GM13977 (cell line): ENCODE measurements at regions of chr7 and their contacts with region 1.

Region 1: DNA sequence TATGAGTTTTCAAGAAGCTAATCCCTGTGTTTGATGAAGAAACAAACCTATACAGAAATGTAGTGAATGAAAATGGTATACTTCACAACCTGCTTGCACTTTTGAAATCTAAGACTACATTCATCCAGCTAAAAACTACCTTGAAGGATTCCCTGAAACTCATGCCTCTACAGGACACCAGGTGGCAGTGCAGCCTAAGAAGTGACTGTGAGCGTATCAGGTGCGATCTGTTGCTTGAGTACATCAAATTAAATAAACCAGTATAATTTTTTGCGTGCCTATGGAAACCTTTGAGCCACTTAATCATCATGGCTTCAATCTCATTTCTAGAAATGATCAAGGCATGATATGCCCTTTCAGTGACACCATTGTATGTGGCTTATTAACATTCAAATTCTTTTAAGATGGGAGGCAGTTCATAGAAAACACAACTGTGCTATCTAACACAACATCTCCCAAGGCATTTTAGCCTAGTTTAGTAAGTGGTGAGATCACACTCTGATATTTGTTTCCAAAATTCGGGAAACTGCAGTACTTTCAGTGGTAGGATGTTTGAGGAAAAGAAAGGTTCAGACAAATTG is 57.4 kb downstream of the PPP1R17 start:
- DNase-seq: peak; percentile 39
- CTCF ChIP-seq: peak; percentile 80

Region 2: GRCh38 chr7:31443457-31443856 is 300.9 kb before region 1 on chr7:
- in situ Hi-C with region 1: loop called (anchors 25 kb)
- DNase-seq: peak; percentile 31
- CTCF ChIP-seq: peak; percentile 77

Region 3: GRCh38 chr7:31648288-31648687 is 96.1 kb before region 1 on chr7:
- in situ Hi-C with region 1: no loop called
- DNase-seq: no peak
- CTCF ChIP-seq: peak; percentile 12

Region 4: GRCh38 chr7:32347244-32347828 is 603.0 kb after region 1 on chr7:
- in situ Hi-C with region 1: loop called (anchors 25 kb)
- DNase-seq: peak; percentile 36
- CTCF ChIP-seq: peak; percentile 71